ENCODE measurements at regions of chr11 and their contacts with region 1.

Region 1: DNA sequence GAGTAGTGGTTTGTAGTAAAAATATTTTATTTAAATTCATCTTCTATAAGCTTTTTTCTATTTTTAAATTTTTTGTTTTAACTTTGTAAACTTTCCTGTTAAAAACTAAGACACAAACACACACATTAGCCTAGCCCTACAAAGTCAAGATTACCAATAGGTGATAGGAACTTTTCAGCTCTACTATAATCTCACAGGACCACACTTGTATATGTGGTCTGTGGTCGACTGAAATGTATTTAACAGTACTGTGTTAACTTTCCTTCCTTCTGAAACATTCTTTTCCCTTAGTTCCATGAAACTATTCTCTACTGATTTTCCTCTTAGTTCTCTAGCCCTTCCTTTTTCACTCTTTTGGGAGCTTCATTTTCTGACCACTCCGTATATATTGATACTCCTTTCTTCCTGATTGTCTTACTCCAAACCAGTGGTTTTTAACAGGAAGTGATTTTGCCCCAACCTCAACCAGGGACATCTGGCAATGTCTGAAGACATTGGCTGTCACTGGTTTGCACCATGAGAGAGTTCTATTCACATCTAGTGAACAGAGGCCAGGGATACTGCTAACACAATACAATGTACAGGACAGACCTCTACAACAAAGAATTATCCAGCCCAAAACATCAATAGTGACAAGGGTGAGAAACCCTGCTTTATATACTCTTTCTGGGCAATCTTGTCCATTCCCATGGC is 8.8 kb downstream of the ZW10 start:
- DNase-seq: no peak
- ATAC-seq: no peak
- H3K4me3 ChIP-seq: no peak overlapping the region
- H3K27ac ChIP-seq: no peak overlapping the region
- H3K4me1 ChIP-seq: peaks cover 0 to 7% (median 0%) of the 10 kb centered on the region in 12 donors
- H3K27me3 ChIP-seq: no peaks in the 10 kb centered on the region
- CTCF ChIP-seq: no peak
- POLR2A ChIP-seq: no peak

Region 2: DNA sequence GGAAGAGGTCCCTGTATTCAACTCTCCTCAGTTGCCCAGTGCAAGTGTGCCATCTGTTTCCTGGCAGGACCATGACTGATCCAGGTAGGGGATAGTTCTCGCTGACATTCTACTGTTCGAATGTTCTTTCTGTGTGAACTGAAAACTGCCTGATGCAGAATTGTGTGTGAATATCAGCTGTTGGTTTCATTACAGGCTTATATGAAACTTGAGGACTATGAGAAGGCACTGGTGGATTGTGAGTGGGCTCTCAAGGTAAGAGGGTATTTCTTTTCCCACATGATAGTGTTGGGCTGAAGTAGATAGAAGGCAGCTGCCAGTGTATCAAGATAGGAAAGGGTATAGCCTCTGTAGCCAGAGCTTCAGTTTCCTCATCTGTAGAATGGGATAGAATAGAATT is 434.9 kb before region 1 on chr11:
- intact Hi-C with region 1: loop called in 1 of 10 experiments (anchors 10 kb)
- DNase-seq: no peak
- ATAC-seq: no peak
- H3K4me3 ChIP-seq: no peak overlapping the region
- H3K27ac ChIP-seq: no peak overlapping the region
- H3K4me1 ChIP-seq: no peaks in the 10 kb centered on the region
- H3K27me3 ChIP-seq: no peaks in the 10 kb centered on the region
- CTCF ChIP-seq: no peak
- POLR2A ChIP-seq: no peak

Measured in heart left ventricle (tissue), 16 donors.